GM10248 (cell line): ENCODE measurements at regions of chr14 and their contacts with region 1.

Region 1: GRCh38 chr14:68377459-68377858 is 415.4 kb downstream of the ZFP36L1 start:
- DNase-seq: no peak
- CTCF ChIP-seq: no peak

Region 2: GRCh38 chr14:68359837-68360552 is 17.5 kb before region 1 on chr14:
- CTCF ChIA-PET with region 1: interaction called, 21 read pairs
- POLR2A ChIA-PET with region 1: no interaction called
- DNase-seq: no peak
- CTCF ChIP-seq: no peak

Region 3: DNA sequence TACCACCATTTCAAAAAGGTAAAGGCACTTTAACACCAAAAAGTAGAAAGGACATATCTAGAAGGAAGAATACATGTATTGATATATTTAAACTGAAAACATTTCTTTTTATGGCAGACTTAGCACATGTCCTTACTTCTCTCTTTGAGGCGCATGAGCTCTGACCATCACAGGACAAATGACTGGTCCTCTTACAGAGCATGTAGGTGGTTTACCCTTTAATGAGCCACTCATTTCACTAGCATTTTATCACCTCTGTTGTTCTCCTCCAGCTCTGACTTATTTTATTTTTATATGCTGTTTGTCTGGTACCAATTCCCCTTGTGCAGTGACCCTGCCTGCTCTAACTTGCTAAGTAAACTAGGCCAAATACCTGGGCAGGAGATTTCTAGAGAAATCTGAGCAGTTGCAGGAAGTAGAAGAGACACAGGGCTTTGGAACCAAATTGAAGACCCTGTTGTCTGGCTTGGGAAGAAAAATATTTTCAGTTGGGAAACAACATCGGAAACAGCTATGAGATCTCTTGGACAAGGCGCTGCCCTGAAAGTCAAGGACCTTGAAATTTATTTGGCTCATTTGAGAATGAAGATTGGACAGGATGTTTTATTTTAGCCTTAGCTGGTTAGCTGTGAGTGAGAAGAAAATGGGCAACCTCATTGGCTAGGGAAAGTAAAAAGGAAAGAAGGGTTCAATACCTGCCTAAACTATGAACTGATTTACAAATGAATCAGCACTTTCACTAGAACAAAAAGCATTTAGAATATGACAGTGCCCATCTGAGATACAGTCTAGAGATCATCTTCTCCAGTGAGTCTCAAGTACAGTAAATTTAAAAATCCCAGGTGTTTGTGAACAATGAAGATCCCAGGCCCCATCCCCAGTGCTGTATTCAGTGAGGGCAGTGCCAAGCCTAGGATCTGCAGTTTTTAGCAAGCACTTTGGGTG is 41.0 kb after region 1 on chr14:
- CTCF ChIA-PET with region 1: no interaction called
- POLR2A ChIA-PET with region 1: no interaction called
- DNase-seq: no peak
- CTCF ChIP-seq: no peak

Region 4: GRCh38 chr14:68563246-68564131 is 186.0 kb after region 1 on chr14:
- CTCF ChIA-PET with region 1: no interaction called
- POLR2A ChIA-PET with region 1: no interaction called
- DNase-seq: no peak
- CTCF ChIP-seq: no peak